A673 (cell line): ENCODE measurements at regions of chrX and their contacts with region 1.

Region 1: GRCh38 chrX:68822641-68823410 is 6.0 kb upstream of the EFNB1 start:
- DNase-seq: peak; percentile 78
- H3K4me3 ChIP-seq: no peak overlapping the region
- H3K27ac ChIP-seq: no peak overlapping the region
- H3K4me1 ChIP-seq: peaks cover 7% of the 10 kb centered on the region
- H3K27me3 ChIP-seq: no peaks in the 10 kb centered on the region
- CTCF ChIP-seq: peak; percentile 66

Region 2: GRCh38 chrX:68511255-68511654 is 311.6 kb before region 1 on chrX:
- CTCF ChIA-PET with region 1: no interaction called
- POLR2A ChIA-PET with region 1: no interaction called
- intact Hi-C with region 1: loop called (anchors 5 kb)
- DNase-seq: peak; percentile 61
- H3K4me3 ChIP-seq: no peak overlapping the region
- H3K27ac ChIP-seq: no peak overlapping the region
- H3K4me1 ChIP-seq: no peaks in the 10 kb centered on the region
- H3K27me3 ChIP-seq: no peaks in the 10 kb centered on the region
- CTCF ChIP-seq: peak; percentile 83

Region 3: GRCh38 chrX:69133921-69134542 is 311.2 kb after region 1 on chrX:
- CTCF ChIA-PET with region 1: no interaction called
- POLR2A ChIA-PET with region 1: no interaction called
- intact Hi-C with region 1: no loop called
- DNase-seq: peak; percentile 54
- H3K4me3 ChIP-seq: no peak overlapping the region
- H3K27ac ChIP-seq: no peak overlapping the region
- H3K4me1 ChIP-seq: peaks cover 18% of the 10 kb centered on the region
- H3K27me3 ChIP-seq: no peaks in the 10 kb centered on the region
- CTCF ChIP-seq: peak; percentile 49